A549 (cell line): ENCODE measurements at regions of chr10 and their contacts with region 1.

Region 1: GRCh38 chr10:93872375-93873158 is 21.2 kb upstream of the SLC35G1 start:
- DNase-seq: no peak
- ATAC-seq: no peak
- H3K4me3 ChIP-seq: no peak overlapping the region
- H3K27ac ChIP-seq: peak overlapping the region; percentile 55 to 67; a peak in 4 of 6 replicates
- H3K4me1 ChIP-seq: peaks cover 15% of the 10 kb centered on the region
- CTCF ChIP-seq: no peak
- EP300 ChIP-seq: no peak
- POLR2A ChIP-seq: no peak
- RAD21 ChIP-seq: no peak

Region 2: GRCh38 chr10:93859049-93859655 is 13.4 kb before region 1 on chr10:
- CTCF ChIA-PET with region 1: interaction called, 18 read pairs
- POLR2A ChIA-PET with region 1: no interaction called
- DNase-seq: peak; percentile 12 to 16
- ATAC-seq: peak in 1 of 2 experiments; percentile 41; a peak in 1 of 6 replicates
- H3K4me3 ChIP-seq: no peak overlapping the region
- H3K27ac ChIP-seq: no peak overlapping the region
- H3K4me1 ChIP-seq: no peaks in the 10 kb centered on the region
- CTCF ChIP-seq: peak; percentile 71
- EP300 ChIP-seq: no peak
- POLR2A ChIP-seq: no peak
- RAD21 ChIP-seq: peak; percentile 68